ENCODE measurements at regions of chr10 and their contacts with region 1.

Region 1: GRCh38 chr10:71569775-71570588 is 149.6 kb downstream of the C10orf105 start:
- DNase-seq: peak; percentile 35
- H3K4me3 ChIP-seq: no peak overlapping the region
- H3K27ac ChIP-seq: no peak overlapping the region
- H3K4me1 ChIP-seq: no peaks in the 10 kb centered on the region
- H3K27me3 ChIP-seq: no peaks in the 10 kb centered on the region
- CTCF ChIP-seq: peak; percentile 71 to 87

Region 2: GRCh38 chr10:71314028-71314693 is 255.8 kb before region 1 on chr10:
- CTCF ChIA-PET with region 1: interaction called, 3 read pairs
- dilution Hi-C with region 1: loop called (anchors 25 kb)
- in situ Hi-C with region 1: loop called in 1 of 2 experiments (anchors 5 kb)
- intact Hi-C with region 1: loop called (anchors 1 kb)
- DNase-seq: no peak
- H3K4me3 ChIP-seq: no peak overlapping the region
- H3K27ac ChIP-seq: no peak overlapping the region
- H3K4me1 ChIP-seq: no peaks in the 10 kb centered on the region
- H3K27me3 ChIP-seq: no peaks in the 10 kb centered on the region
- CTCF ChIP-seq: peak; percentile 67 to 76

Region 3: GRCh38 chr10:71383972-71384687 is 185.9 kb before region 1 on chr10:
- CTCF ChIA-PET with region 1: no interaction called
- dilution Hi-C with region 1: no loop called
- in situ Hi-C with region 1: no loop called
- intact Hi-C with region 1: loop called (anchors 1 kb)
- DNase-seq: no peak
- H3K4me3 ChIP-seq: no peak overlapping the region
- H3K27ac ChIP-seq: no peak overlapping the region
- H3K4me1 ChIP-seq: no peaks in the 10 kb centered on the region
- H3K27me3 ChIP-seq: no peaks in the 10 kb centered on the region
- CTCF ChIP-seq: peak; percentile 93 to 94

Region 4: DNA sequence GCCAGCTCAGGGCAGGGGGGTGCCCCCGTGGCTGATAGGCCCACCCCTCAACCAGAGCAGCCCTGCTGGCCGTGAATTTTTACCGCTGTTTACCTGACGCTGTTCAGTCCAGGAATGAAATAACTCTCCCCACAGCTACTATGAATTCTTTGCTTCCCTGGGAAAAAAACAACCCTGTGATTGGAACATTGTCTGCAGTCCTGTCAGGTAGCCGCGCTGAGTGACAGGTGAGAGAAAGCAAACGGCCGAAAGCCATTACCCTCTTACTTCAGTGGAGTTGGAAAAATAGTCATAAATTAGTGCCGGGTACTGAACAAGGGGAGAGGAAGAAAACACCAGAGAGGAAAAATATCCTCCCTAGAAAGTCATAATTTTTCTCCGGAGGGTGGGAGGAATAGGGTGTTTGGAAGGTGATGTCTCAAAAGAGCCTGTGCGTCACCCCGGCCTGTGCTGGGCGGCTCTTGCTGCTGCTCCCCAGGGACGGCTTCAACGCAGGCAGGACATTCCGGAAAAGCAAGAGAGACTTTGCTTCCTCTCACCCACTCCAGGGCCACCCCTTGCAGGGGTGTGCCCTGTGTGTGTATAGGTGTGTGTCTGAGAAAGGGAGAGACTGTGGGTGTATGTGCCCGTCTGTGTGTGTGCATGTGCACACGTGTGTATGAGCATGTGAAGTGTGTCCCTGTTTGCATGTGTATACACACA is 104.3 kb before region 1 on chr10:
- CTCF ChIA-PET with region 1: no interaction called
- dilution Hi-C with region 1: loop called (anchors 5 kb)
- in situ Hi-C with region 1: no loop called
- intact Hi-C with region 1: no loop called
- DNase-seq: no peak
- H3K4me3 ChIP-seq: no peak overlapping the region
- H3K27ac ChIP-seq: no peak overlapping the region
- H3K4me1 ChIP-seq: no peaks in the 10 kb centered on the region
- H3K27me3 ChIP-seq: no peaks in the 10 kb centered on the region
- CTCF ChIP-seq: no peak

Region 5: GRCh38 chr10:71522442-71523144 is 47.4 kb before region 1 on chr10:
- CTCF ChIA-PET with region 1: no interaction called
- dilution Hi-C with region 1: loop called (anchors 5 kb)
- in situ Hi-C with region 1: no loop called
- intact Hi-C with region 1: no loop called
- DNase-seq: no peak
- H3K4me3 ChIP-seq: no peak overlapping the region
- H3K27ac ChIP-seq: no peak overlapping the region
- H3K4me1 ChIP-seq: peaks cover 17% of the 10 kb centered on the region
- H3K27me3 ChIP-seq: no peaks in the 10 kb centered on the region
- CTCF ChIP-seq: peak in 1 of 2 donors; percentile 23

Region 6: GRCh38 chr10:71893920-71894319 is 323.9 kb after region 1 on chr10:
- CTCF ChIA-PET with region 1: no interaction called
- dilution Hi-C with region 1: no loop called
- in situ Hi-C with region 1: no loop called
- intact Hi-C with region 1: loop called (anchors 2 kb)
- DNase-seq: no peak
- H3K4me3 ChIP-seq: no peak overlapping the region
- H3K27ac ChIP-seq: no peak overlapping the region
- H3K4me1 ChIP-seq: peaks cover 7% of the 10 kb centered on the region
- H3K27me3 ChIP-seq: no peaks in the 10 kb centered on the region
- CTCF ChIP-seq: no peak